ENCODE measurements at regions of chr18 and their contacts with region 1.

Region 1: GRCh38 chr18:36942264-36942663 is 113.3 kb downstream of the KIAA1328 start:
- DNase-seq: peak in 1 of 2 experiments; percentile 17
- H3K4me3 ChIP-seq: no peak overlapping the region
- H3K4me3 Mint-ChIP-seq: no peak overlapping the region
- H3K27ac Mint-ChIP-seq: no peak overlapping the region
- H3K4me1 ChIP-seq: no peaks in the 10 kb centered on the region
- H3K4me1 Mint-ChIP-seq: no peaks in the 10 kb centered on the region
- H3K27me3 ChIP-seq: no peaks in the 10 kb centered on the region
- H3K27me3 Mint-ChIP-seq: no peaks in the 10 kb centered on the region
- CTCF ChIP-seq: no peak

Region 2: GRCh38 chr18:36953047-36953446 is 10.8 kb after region 1 on chr18:
- CTCF ChIA-PET with region 1: no interaction called
- POLR2A ChIA-PET with region 1: no interaction called
- intact Hi-C with region 1: no loop called
- DNase-seq: no peak
- H3K4me3 ChIP-seq: no peak overlapping the region
- H3K4me3 Mint-ChIP-seq: no peak overlapping the region
- H3K27ac Mint-ChIP-seq: no peak overlapping the region
- H3K4me1 ChIP-seq: no peaks in the 10 kb centered on the region
- H3K4me1 Mint-ChIP-seq: no peaks in the 10 kb centered on the region
- H3K27me3 ChIP-seq: no peaks in the 10 kb centered on the region
- H3K27me3 Mint-ChIP-seq: no peaks in the 10 kb centered on the region
- CTCF ChIP-seq: no peak

Region 3: DNA sequence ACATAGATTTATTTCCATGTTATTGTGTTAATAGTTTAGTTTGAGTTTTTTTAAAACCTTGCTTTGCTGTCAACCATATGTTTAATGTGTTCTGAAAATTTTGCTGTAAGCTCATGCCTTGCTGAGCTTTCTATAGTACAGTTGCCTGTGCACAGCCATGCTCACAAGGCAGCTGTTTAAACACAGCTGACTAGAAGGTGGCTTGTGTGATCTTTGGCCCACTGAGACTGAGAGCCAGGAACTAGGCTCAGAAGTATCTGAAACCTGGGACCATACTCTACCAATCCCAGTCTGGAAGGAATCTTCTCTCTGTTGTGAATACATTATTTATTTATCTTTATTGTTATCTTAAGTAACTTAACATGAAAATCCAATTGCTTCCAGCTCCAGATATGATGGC is 237.1 kb after region 1 on chr18:
- CTCF ChIA-PET with region 1: no interaction called
- POLR2A ChIA-PET with region 1: no interaction called
- intact Hi-C with region 1: loop called (anchors 2 kb)
- DNase-seq: peak; percentile 8 to 26
- H3K4me3 ChIP-seq: no peak overlapping the region
- H3K4me3 Mint-ChIP-seq: no peak overlapping the region
- H3K27ac Mint-ChIP-seq: peak overlapping the region; percentile 48
- H3K4me1 ChIP-seq: peaks cover 23% of the 10 kb centered on the region
- H3K4me1 Mint-ChIP-seq: peaks cover 8% of the 10 kb centered on the region
- H3K27me3 ChIP-seq: no peaks in the 10 kb centered on the region
- H3K27me3 Mint-ChIP-seq: no peaks in the 10 kb centered on the region
- CTCF ChIP-seq: no peak